ENCODE measurements at regions of chr3 and their contacts with region 1.

Region 1: DNA sequence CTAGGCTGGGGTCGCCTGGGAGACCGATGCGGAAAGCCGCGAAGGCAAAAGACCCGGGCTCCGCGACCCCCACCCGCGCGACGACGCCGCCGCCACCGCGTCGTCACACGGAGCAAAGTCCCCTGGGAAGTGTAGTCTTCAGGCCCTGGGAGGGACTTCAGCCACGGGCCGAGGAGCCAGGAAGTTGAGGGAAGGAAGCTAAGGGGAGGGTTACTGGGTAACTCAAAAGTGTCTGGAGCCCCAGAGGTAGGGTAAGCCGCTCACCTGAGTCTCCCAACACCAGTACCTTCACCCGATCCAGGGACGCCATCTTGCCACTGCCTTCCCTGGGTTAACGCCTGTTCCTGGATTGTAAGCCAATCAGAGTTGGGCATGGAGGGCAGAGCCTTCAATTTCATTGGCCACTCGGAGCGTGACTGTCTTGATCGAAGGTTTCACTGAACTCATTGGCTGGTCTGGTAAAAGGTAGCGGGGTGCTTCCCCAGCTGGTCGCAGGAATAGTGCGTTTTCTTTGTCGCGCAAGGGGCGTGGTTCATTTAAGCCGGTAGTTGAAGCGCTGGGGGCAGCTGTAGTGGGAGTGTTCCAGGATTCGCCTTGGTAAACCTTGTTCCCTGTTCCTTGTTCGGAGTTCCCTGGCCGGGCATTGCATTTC is at the starts of genes GTF2E1 and RABL3:
- DNase-seq: peak; percentile 96 to 97
- ATAC-seq: peak; percentile 98 to 100 (median 100)
- H3K4me3 ChIP-seq: peak within 1 kb of the TSS; percentile 80
- H3K27ac ChIP-seq: peak within 1 kb of the TSS; percentile 95
- H3K4me1 ChIP-seq: peaks cover 12% of the 10 kb centered on the region
- H3K27me3 ChIP-seq: no peaks in the 10 kb centered on the region
- CTCF ChIP-seq: no peak
- total RNA-seq, gene GTF2E1: 11.3 to 16.1 (median 12.8) TPM
- total RNA-seq, gene RABL3: 21.0 to 34.0 (median 27.6) TPM

Region 2: DNA sequence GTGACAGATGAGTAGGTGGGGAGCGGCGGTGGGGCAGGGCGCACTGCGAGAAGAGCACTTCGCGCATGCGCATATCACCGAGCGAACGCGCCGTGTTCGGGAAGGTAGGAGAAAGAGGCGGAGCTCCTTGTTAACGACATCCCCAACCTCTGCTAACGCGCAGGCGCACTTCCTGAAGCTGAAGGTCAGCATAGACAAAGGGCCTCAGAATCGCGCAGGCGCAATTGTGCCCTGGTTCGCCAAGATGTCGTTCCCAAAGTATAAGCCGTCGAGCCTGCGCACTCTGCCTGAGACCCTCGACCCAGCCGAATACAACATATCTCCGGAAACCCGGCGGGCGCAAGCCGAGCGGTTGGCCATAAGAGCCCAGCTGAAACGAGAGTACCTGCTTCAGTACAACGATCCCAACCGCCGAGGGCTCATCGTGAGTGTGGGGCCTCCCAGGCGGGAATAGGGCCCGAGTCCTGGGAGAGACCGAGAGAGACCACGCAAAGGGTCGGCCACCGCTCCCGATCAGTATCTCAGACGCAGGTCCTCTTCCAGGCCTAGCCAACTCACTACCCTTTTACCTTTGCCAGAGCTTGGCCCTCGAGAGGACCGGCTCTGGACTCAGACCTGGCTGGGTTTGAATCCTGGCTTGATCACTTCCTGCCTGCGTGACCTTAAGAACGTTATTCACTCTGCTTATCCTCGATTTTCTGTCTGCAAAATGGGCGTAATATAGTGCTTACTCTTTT is 146.0 kb before region 1 on chr3 and contains the start of gene NDUFB4:
- intact Hi-C with region 1: loop called (anchors 5 kb)
- DNase-seq: peak; percentile 98 to 99
- ATAC-seq: peak; percentile 100
- H3K4me3 ChIP-seq: peak within 1 kb of the TSS; percentile 71
- H3K27ac ChIP-seq: peak within 1 kb of the TSS; percentile 81
- H3K4me1 ChIP-seq: peaks cover 28% of the 10 kb centered on the region
- H3K27me3 ChIP-seq: no peaks in the 10 kb centered on the region
- CTCF ChIP-seq: no peak
- total RNA-seq, gene NDUFB4: 301 to 379 (median 314) TPM

Measured in psoas muscle (tissue), 8 donors.